ENCODE measurements at regions of chr7 and their contacts with region 1.

Region 1: GRCh38 chr7:48109848-48110663 is 21.0 kb downstream of the UPP1 start:
- DNase-seq: peak in 1 of 2 donors; percentile 86
- H3K4me3 ChIP-seq: no peak overlapping the region
- H3K27ac ChIP-seq: no peak overlapping the region
- H3K4me1 ChIP-seq: no peaks in the 10 kb centered on the region
- H3K27me3 ChIP-seq: no peaks in the 10 kb centered on the region
- CTCF ChIP-seq: peak; percentile 87 to 99 (median 98)

Region 2: DNA sequence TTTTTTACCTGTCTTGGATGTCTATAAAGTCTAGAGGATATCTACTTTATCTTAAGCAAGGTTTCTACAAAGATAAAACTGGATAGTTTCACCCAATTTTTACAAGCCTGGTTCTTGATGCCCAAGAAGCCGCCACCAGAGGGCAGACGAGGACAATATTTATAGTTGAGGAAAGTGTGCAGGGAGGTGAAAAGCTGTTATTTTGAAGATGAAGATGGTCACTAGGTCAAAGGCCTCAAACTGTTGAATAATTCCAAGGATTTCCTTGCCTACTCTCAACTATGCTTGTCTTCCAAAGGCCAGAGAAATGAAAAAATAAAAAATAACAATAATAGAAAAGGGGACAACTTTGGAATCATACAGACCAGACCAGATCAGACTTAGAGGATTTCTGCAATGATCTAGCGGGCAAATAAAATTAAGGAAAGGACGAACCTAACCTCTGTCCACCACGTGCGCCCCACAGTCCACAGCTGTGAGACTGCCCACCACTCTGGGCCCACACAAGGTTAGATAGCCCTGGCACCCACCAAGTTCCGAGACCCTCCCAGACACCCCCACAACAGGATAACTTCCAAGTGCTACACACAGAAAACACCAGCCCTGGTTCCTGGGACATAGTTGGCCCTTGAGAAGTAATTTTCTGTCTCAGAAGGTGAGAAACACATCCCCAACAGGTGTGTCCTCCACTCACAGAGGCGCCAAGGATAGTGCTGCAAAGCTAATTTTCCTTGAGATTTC is 164.6 kb before region 1 on chr7:
- intact Hi-C with region 1: loop called (anchors 1 kb)
- DNase-seq: peak in 1 of 2 donors; percentile 88
- H3K4me3 ChIP-seq: no peak overlapping the region
- H3K27ac ChIP-seq: no peak overlapping the region
- H3K4me1 ChIP-seq: peaks cover 7 to 12% of the 10 kb centered on the region in 2 donors
- H3K27me3 ChIP-seq: no peaks in the 10 kb centered on the region
- CTCF ChIP-seq: peak; percentile 51 to 84 (median 83)

Region 3: GRCh38 chr7:47991741-47992311 is 118.2 kb before region 1 on chr7:
- intact Hi-C with region 1: loop called (anchors 1 kb)
- DNase-seq: peak; percentile 53 to 88
- H3K4me3 ChIP-seq: peak overlapping the region; percentile 50 to 67
- H3K27ac ChIP-seq: peak overlapping the region in 1 of 2 donors; percentile 38
- H3K4me1 ChIP-seq: no peaks in the 10 kb centered on the region
- H3K27me3 ChIP-seq: no peaks in the 10 kb centered on the region
- CTCF ChIP-seq: peak; percentile 49 to 74 (median 56)

Region 4: GRCh38 chr7:48035301-48035966 is 74.6 kb before region 1 on chr7 and contains the start of gene C7orf57:
- intact Hi-C with region 1: loop called (anchors 1 kb)
- DNase-seq: peak; percentile 70 to 94
- H3K4me3 ChIP-seq: peak within 1 kb of the TSS; percentile 51 to 73
- H3K27ac ChIP-seq: no peak within 1 kb of the TSS
- H3K4me1 ChIP-seq: peaks cover 0 to 8% of the 10 kb centered on the region in 2 donors
- H3K27me3 ChIP-seq: no peaks in the 10 kb centered on the region
- CTCF ChIP-seq: peak in 2 of 3 experiments; percentile 51 to 53
- total RNA-seq, gene C7orf57: not detected

Region 5: GRCh38 chr7:48741545-48741944 is 631.5 kb after region 1 on chr7:
- intact Hi-C with region 1: no loop called
- DNase-seq: no peak
- H3K4me3 ChIP-seq: no peak overlapping the region
- H3K27ac ChIP-seq: no peak overlapping the region
- H3K4me1 ChIP-seq: no peaks in the 10 kb centered on the region
- H3K27me3 ChIP-seq: no peaks in the 10 kb centered on the region
- CTCF ChIP-seq: no peak